Ascending aorta (tissue), 2 donors: ENCODE measurements at regions of chr15 and their contacts with region 1.

Region 1: DNA sequence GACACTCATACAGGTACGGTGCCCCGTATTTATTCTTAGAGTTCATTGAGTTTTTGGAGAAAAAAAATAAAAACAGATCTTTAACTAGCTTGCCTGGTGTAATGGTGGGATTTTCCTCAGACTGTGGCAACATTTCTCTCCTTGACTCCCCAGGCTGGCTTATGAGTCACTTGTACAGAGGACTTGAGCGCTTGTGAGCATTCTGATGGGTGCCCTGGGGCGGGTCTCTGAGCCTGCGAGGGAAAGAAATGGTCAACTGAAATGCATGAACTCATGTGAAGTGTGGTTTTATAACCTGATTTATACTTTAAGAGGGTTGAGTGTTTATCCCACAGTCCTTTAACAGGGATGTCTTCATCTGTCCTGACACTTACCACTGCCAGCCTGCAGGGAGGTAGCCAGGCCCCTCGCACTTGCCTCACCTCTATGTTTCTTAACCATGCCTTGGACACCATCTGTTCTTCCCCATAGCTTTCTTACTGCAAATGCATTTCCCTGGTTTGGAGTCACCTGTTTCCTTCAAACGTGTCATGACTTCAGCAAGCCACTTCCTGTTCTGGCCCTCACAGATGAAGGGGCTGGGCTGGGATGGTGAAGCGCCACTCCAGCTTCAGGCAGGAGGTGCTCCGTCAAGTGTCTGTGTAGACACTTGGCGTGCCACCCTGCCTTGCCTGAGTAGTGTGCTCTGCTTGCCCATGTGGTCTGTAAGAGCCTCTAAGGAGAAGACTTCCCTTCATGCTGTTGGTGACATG is 118.7 kb downstream of the PDE8A start:
- DNase-seq: no peak
- H3K4me3 ChIP-seq: no peak overlapping the region
- H3K27ac ChIP-seq: no peak overlapping the region
- H3K4me1 ChIP-seq: no peaks in the 10 kb centered on the region
- H3K27me3 ChIP-seq: no peaks in the 10 kb centered on the region
- CTCF ChIP-seq: no peak

Region 2: DNA sequence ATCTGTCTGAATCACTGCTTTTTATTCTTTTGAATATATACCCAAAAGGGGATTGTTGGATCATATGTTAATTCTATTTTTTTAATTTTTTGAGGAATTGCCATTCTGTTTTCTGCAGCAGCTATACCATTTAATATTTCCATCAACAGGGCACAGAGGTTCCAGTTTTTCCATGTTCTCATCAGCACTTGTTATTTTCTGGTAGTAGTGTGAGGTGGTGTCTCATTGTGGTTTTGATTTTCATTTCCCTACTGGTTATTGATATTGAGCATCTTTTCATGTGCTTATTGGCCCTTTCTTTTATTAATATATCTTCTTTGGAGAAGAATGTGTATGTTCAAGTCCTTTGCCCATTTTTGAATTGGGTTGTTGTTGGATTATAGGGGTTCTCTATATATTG is 50.6 kb before region 1 on chr15:
- intact Hi-C with region 1: no loop called
- DNase-seq: no peak
- H3K4me3 ChIP-seq: no peak overlapping the region
- H3K27ac ChIP-seq: no peak overlapping the region
- H3K4me1 ChIP-seq: peaks cover 0 to 2% of the 10 kb centered on the region in 2 donors
- H3K27me3 ChIP-seq: no peaks in the 10 kb centered on the region
- CTCF ChIP-seq: no peak

Region 3: GRCh38 chr15:85168642-85169173 is 68.3 kb after region 1 on chr15:
- intact Hi-C with region 1: loop called (anchors 10 kb)
- DNase-seq: no peak
- H3K4me3 ChIP-seq: peak overlapping the region in 1 of 2 donors; percentile 34
- H3K27ac ChIP-seq: no peak overlapping the region
- H3K4me1 ChIP-seq: no peaks in the 10 kb centered on the region
- H3K27me3 ChIP-seq: no peaks in the 10 kb centered on the region
- CTCF ChIP-seq: no peak